ENCODE measurements at regions of chr3 and their contacts with region 1.

Region 1: DNA sequence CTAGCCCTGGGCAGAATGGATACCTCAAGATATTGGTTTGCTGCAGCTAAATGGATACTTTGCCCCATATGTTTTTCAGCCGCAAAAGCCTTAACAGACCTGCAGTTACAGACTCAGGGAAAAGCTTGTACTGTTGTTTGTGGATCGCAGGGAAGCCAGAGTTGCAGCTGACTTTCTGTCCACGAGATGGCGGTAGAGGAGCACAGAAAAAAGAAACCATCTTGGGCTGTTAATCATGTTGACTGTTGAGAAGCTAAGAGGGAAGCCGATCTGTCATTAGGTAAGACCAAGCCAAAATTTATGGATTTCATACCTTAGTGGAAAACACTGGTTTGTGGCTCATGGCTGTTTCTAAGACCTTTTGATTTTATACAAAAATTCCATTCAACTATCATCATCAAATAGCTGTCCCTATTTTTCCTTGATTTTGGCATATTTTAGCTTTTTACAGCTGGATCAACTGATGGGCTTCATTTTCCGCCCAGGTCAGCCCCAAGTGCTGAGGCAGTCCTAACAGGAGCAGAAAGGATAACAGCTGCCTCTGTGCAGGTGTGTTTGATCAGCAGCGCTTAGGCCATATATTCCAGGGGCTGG is 205.7 kb upstream of the ZPLD1 start:
- DNase-seq: peak; percentile 81
- H3K4me3 Mint-ChIP-seq: no peak overlapping the region
- H3K27ac Mint-ChIP-seq: no peak overlapping the region
- H3K4me1 Mint-ChIP-seq: peaks cover 21% of the 10 kb centered on the region
- H3K27me3 Mint-ChIP-seq: no peaks in the 10 kb centered on the region

Region 2: GRCh38 chr3:101803173-101803782 is 425.9 kb before region 1 on chr3:
- CTCF ChIA-PET with region 1: interaction called, 321 read pairs
- DNase-seq: peak; percentile 70
- H3K4me3 Mint-ChIP-seq: no peak overlapping the region
- H3K27ac Mint-ChIP-seq: peak overlapping the region; percentile 71
- H3K4me1 Mint-ChIP-seq: peaks cover 12% of the 10 kb centered on the region
- H3K27me3 Mint-ChIP-seq: no peaks in the 10 kb centered on the region

Region 3: DNA sequence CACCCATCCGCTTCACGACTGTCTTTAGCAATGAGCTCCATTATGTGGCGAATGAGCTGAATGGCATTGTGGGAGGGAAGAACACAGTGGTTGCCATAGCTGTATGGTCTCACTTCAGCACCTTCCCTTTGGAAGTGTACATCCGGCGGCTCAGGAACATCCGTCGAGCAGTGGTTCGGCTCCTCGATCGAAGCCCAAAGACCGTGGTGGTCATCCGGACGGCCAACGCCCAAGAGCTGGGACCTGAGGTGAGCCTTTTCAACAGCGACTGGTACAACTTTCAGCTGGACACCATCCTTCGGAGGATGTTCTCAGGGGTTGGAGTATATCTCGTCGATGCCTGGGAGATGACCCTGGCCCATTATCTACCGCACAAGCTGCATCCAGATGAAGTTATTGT is 407.7 kb before region 1 on chr3:
- CTCF ChIA-PET with region 1: interaction called, 321 read pairs
- DNase-seq: no peak
- H3K4me3 Mint-ChIP-seq: no peak overlapping the region
- H3K27ac Mint-ChIP-seq: no peak overlapping the region
- H3K4me1 Mint-ChIP-seq: peaks cover 11% of the 10 kb centered on the region
- H3K27me3 Mint-ChIP-seq: no peaks in the 10 kb centered on the region

Region 4: DNA sequence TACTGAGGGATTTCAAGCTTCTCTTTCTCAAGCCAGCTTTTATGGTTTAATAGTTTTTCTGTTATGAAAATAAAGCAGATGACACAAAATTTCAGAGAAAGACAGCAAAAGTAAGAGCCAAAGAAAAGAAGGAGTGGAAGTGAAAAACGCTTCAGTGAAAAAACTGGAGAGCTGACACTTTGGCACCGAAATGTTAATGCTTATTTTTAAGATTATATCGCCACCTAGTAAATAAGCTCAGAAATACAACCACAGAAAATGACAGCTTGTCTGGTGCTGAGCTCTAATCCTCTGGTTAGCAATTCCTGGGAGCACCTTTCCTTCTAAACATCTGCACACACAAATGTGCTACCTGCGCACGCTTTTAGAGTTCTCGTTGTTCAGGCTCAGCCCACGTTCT is 307.3 kb after region 1 on chr3:
- CTCF ChIA-PET with region 1: interaction called, 151 read pairs
- DNase-seq: no peak
- H3K4me3 Mint-ChIP-seq: no peak overlapping the region
- H3K27ac Mint-ChIP-seq: no peak overlapping the region
- H3K4me1 Mint-ChIP-seq: peaks cover 3% of the 10 kb centered on the region
- H3K27me3 Mint-ChIP-seq: no peaks in the 10 kb centered on the region

Region 5: GRCh38 chr3:102904629-102905028 is 675.5 kb after region 1 on chr3:
- CTCF ChIA-PET with region 1: no interaction called
- DNase-seq: no peak
- H3K4me3 Mint-ChIP-seq: no peak overlapping the region
- H3K27ac Mint-ChIP-seq: no peak overlapping the region
- H3K4me1 Mint-ChIP-seq: no peaks in the 10 kb centered on the region
- H3K27me3 Mint-ChIP-seq: no peaks in the 10 kb centered on the region